HEK293 (cell line): ENCODE measurements at regions of chr6 and their contacts with region 1.

Region 1: GRCh38 chr6:111361648-111362047 is 121.4 kb downstream of the REV3L start:
- H3K4me3 ChIP-seq: no peak overlapping the region
- H3K27ac ChIP-seq: no peak overlapping the region
- H3K4me1 ChIP-seq: no peaks in the 10 kb centered on the region
- CTCF ChIP-seq: no peak

Region 2: DNA sequence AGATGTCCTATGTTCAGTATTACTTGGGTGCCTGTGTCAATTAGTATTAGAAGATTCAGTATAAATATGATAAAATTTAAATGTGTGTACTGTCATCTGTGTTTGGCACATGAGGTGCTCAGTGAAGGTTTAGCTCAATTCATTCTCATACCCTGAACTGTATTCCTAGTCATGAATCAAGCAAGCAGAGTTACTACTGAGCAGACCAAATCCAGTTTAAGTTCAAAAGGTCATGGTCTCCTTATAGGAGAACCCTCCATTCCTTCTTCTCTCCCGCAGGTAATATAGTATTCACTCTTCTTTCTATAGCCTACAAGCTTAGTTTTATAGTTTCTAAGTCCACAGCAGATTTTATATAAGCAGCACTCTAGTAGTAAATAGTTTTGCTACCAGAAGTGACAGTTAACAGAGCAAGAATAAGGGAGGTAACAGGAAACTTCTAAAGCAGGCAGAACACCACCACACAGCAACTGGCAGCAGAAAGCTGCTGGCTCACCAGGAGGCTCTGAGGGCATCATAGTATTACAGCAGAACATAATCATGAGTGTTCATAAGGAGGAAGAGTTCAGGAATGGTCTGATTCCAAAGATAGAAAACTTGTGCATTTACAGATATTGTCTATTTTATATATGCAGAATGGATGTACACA is 141.1 kb before region 1 on chr6:
- CTCF ChIA-PET with region 1: no interaction called
- POLR2A ChIA-PET with region 1: no interaction called
- H3K4me3 ChIP-seq: no peak overlapping the region
- H3K27ac ChIP-seq: no peak overlapping the region
- H3K4me1 ChIP-seq: no peaks in the 10 kb centered on the region
- CTCF ChIP-seq: no peak

Region 3: GRCh38 chr6:111417181-111417585 is 55.5 kb after region 1 on chr6:
- CTCF ChIA-PET with region 1: no interaction called
- POLR2A ChIA-PET with region 1: no interaction called
- H3K4me3 ChIP-seq: no peak overlapping the region
- H3K27ac ChIP-seq: no peak overlapping the region
- H3K4me1 ChIP-seq: peaks cover 9% of the 10 kb centered on the region; the same call in 1 of the 2 replicates
- CTCF ChIP-seq: no peak

Region 4: GRCh38 chr6:111478749-111479148 is 117.1 kb after region 1 on chr6:
- CTCF ChIA-PET with region 1: interaction called, 16 read pairs
- POLR2A ChIA-PET with region 1: interaction called, 4 read pairs
- H3K4me3 ChIP-seq: no peak overlapping the region
- H3K27ac ChIP-seq: no peak overlapping the region
- H3K4me1 ChIP-seq: peaks cover 19% of the 10 kb centered on the region
- CTCF ChIP-seq: no peak